Ovary (tissue), 10 donors: ENCODE measurements at regions of chr2 and their contacts with region 1.

Region 1: DNA sequence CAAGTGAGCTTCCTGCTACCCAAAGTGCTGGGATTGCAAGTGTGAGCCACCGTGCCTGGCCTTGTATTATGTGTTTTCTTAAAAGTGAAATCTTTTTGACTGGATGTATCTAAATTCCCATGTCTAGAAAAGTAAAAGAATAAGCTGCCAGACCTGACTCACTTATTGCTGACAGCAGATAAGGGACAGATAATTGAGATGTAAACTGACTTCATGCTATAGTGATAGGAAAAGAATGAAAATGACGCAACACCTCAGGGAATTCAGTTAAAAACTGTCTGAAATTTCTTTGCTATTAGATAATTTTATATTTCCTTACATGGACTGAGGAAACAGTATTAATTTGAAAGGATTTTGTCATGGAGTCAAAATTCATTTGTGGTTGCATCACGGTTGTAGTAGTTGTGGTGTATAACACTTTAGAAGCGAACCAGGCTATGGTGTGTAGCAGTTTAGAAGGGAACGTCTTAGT is 19.4 kb downstream of the TTC27 start:
- DNase-seq: no peak
- H3K4me3 ChIP-seq: no peak overlapping the region
- H3K27ac ChIP-seq: no peak overlapping the region
- H3K4me1 ChIP-seq: no peaks in the 10 kb centered on the region
- H3K27me3 ChIP-seq: no peaks in the 10 kb centered on the region
- CTCF ChIP-seq: no peak
- EP300 ChIP-seq: no peak
- POLR2A ChIP-seq: no peak

Region 2: GRCh38 chr2:31859959-31860358 is 787.3 kb before region 1 on chr2:
- intact Hi-C with region 1: loop called in 1 of 4 experiments (anchors 10 kb)
- DNase-seq: no peak
- H3K4me3 ChIP-seq: no peak overlapping the region
- H3K27ac ChIP-seq: no peak overlapping the region
- H3K4me1 ChIP-seq: no peaks in the 10 kb centered on the region
- H3K27me3 ChIP-seq: no peaks in the 10 kb centered on the region
- CTCF ChIP-seq: no peak
- EP300 ChIP-seq: no peak
- POLR2A ChIP-seq: no peak

Region 3: GRCh38 chr2:33497221-33497650 is 850.0 kb after region 1 on chr2:
- intact Hi-C with region 1: no loop called
- DNase-seq: no peak
- H3K4me3 ChIP-seq: no peak overlapping the region
- H3K27ac ChIP-seq: no peak overlapping the region
- H3K4me1 ChIP-seq: no peaks in the 10 kb centered on the region
- H3K27me3 ChIP-seq: no peaks in the 10 kb centered on the region
- CTCF ChIP-seq: no peak
- EP300 ChIP-seq: no peak
- POLR2A ChIP-seq: no peak